Left ventricle myocardium inferior (tissue), 1 donor: ENCODE measurements at regions of chr1 and their contacts with region 1.

Region 1: GRCh38 chr1:87328272-87329050 is at the start of gene LMO4:
- DNase-seq: peak; percentile 97
- H3K4me3 ChIP-seq: peak within 1 kb of the TSS; percentile 92
- H3K27ac ChIP-seq: peak within 1 kb of the TSS; percentile 97
- H3K4me1 ChIP-seq: peaks cover 55% of the 10 kb centered on the region
- H3K27me3 ChIP-seq: no peaks in the 10 kb centered on the region
- CTCF ChIP-seq: no peak
- total RNA-seq, gene LMO4: 35.1 TPM

Region 2: GRCh38 chr1:87386217-87386790 is 57.8 kb after region 1 on chr1:
- intact Hi-C with region 1: no loop called
- DNase-seq: no peak
- H3K4me3 ChIP-seq: no peak overlapping the region
- H3K27ac ChIP-seq: no peak overlapping the region
- H3K4me1 ChIP-seq: no peaks in the 10 kb centered on the region
- H3K27me3 ChIP-seq: no peaks in the 10 kb centered on the region
- CTCF ChIP-seq: no peak

Region 3: DNA sequence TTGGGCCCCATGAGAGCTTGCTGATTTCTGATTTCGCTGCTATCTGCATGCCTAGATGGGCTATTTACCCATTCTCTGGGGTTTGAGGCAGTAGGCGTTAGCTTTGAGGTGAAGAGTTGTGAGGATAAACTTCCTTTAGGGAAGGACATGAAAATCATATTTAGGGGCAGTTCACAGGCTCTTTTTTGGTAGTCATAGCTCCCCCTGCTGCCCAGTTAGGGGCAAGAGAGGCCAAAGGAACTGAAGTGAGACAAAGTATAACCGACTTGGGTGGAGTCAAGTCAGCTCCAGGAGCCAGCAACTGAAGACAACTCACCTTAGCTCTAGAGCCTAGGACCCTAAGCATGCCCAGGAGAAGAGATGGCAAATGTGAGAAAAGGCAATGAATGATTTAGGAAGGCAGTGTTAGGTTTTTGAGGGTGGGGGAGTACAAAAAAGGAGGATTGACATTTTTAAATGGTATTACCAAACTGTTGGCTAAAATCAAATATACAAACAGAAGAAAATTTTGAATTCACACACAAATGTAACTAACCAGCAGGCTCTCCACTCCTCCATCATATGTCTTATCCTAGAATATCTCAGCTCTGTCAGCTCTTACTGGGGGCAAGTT is 625.4 kb after region 1 on chr1:
- intact Hi-C with region 1: loop called (anchors 5 kb)
- DNase-seq: peak; percentile 38
- H3K4me3 ChIP-seq: no peak overlapping the region
- H3K27ac ChIP-seq: no peak overlapping the region
- H3K4me1 ChIP-seq: peaks cover 22% of the 10 kb centered on the region
- H3K27me3 ChIP-seq: no peaks in the 10 kb centered on the region
- CTCF ChIP-seq: peak; percentile 84